ENCODE measurements at regions of chr9 and their contacts with region 1.

Region 1: GRCh38 chr9:33816327-33817252 is at the start of gene UBE2R2:
- DNase-seq: peak; percentile 97
- H3K4me3 Mint-ChIP-seq: peak within 1 kb of the TSS; percentile 94
- H3K27ac Mint-ChIP-seq: peak within 1 kb of the TSS; percentile 95
- H3K4me1 Mint-ChIP-seq: peaks cover 48% of the 10 kb centered on the region
- H3K27me3 Mint-ChIP-seq: peaks cover 3% of the 10 kb centered on the region
- total RNA-seq, gene UBE2R2: 41.6 and 41.9 TPM in 2 replicates

Region 2: GRCh38 chr9:33750307-33750838 is 66.2 kb before region 1 on chr9:
- intact Hi-C with region 1: no loop called
- DNase-seq: no peak
- H3K4me3 Mint-ChIP-seq: no peak overlapping the region
- H3K27ac Mint-ChIP-seq: no peak overlapping the region
- H3K4me1 Mint-ChIP-seq: peaks cover 10% of the 10 kb centered on the region
- H3K27me3 Mint-ChIP-seq: peaks cover 77% of the 10 kb centered on the region

Region 3: GRCh38 chr9:33852216-33852826 is 35.7 kb after region 1 on chr9:
- intact Hi-C with region 1: loop called (anchors 1 kb)
- DNase-seq: peak; percentile 80
- H3K4me3 Mint-ChIP-seq: no peak overlapping the region
- H3K27ac Mint-ChIP-seq: no peak overlapping the region
- H3K4me1 Mint-ChIP-seq: peaks cover 17% of the 10 kb centered on the region
- H3K27me3 Mint-ChIP-seq: no peaks in the 10 kb centered on the region

Region 4: GRCh38 chr9:33867747-33868439 is 51.3 kb after region 1 on chr9:
- intact Hi-C with region 1: no loop called
- DNase-seq: no peak
- H3K4me3 Mint-ChIP-seq: no peak overlapping the region
- H3K27ac Mint-ChIP-seq: no peak overlapping the region
- H3K4me1 Mint-ChIP-seq: peaks cover 6% of the 10 kb centered on the region
- H3K27me3 Mint-ChIP-seq: no peaks in the 10 kb centered on the region

Region 5: DNA sequence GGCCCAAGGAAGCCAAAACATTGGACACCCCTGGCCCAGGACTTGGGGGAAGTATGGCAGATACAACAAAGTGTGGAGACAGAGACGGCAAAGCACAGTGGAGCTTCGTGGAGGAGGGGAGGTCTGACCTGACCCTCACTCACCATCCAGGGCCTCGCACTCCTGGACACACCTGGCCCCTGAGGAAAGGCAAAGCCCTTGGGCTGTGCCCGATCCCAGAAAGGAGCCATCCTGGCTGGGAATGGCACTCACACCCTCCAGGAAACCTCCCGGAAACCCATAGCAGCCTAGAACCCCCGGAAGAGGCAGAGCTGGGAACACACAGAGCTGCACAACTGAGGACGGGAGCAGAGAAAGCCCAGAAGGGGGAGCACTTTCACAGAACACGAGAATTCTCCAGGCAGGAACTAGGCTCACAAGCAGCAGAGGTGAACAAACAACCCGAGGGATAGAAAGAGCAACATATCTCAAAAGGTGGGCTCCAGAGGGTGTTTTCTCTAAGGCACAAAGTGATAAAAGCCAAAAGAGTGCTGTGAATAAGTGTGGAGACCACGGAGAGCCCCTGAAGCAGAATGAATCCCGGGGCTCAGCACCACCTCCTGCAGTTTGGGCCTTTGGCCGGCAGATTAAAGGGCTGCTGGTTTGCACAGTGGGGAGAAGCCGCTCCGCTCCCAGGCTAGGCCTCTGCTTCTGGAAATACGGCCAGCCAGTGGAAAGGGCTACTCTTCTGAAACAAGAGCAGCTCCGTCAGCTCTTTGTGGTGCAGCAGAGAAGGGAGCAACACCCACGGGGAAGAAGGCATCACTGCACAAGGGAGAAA is 108.6 kb after region 1 on chr9:
- intact Hi-C with region 1: loop called (anchors 10 kb)
- DNase-seq: peak; percentile 76
- H3K4me3 Mint-ChIP-seq: no peak overlapping the region
- H3K27ac Mint-ChIP-seq: peak overlapping the region; percentile 35
- H3K4me1 Mint-ChIP-seq: no peaks in the 10 kb centered on the region
- H3K27me3 Mint-ChIP-seq: no peaks in the 10 kb centered on the region

Region 6: DNA sequence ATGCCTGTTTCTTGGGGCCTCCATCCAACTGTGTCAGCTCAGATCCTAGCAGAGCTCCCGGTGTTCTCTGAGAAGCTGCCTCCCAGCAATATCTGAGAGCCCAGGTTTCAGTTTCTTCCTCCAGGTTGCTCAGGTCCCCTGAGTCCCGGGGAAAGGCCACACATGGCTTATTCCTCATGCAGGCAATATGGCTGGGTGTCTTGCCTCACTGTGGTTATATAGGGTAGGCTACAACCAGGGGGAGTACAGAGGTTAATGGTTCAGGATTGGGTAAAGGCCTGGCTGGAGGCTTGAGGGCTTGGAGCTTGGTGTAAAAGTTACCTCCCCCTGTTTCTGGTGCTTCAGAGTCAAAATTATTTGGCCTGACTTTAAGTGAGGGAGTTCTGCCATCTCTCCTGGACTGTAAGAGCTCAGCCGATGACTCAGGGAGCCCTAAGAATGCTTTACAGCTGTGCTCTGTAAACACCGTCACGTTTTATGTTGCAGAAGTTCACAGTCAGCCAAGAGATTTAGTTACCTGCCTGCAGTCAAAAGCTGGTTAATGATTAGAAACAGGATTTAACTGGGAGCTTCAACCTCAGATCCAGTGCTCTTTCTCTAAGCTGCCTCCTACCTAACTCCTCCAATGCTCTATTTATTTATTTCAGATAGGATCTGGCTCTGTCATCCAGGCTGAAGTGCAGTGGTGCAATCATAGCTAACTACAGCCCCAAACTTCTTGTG is 256.4 kb after region 1 on chr9:
- intact Hi-C with region 1: loop called (anchors 1 kb)
- DNase-seq: no peak
- H3K4me3 Mint-ChIP-seq: no peak overlapping the region
- H3K27ac Mint-ChIP-seq: no peak overlapping the region
- H3K4me1 Mint-ChIP-seq: no peaks in the 10 kb centered on the region
- H3K27me3 Mint-ChIP-seq: peaks cover 1% of the 10 kb centered on the region

Region 7: DNA sequence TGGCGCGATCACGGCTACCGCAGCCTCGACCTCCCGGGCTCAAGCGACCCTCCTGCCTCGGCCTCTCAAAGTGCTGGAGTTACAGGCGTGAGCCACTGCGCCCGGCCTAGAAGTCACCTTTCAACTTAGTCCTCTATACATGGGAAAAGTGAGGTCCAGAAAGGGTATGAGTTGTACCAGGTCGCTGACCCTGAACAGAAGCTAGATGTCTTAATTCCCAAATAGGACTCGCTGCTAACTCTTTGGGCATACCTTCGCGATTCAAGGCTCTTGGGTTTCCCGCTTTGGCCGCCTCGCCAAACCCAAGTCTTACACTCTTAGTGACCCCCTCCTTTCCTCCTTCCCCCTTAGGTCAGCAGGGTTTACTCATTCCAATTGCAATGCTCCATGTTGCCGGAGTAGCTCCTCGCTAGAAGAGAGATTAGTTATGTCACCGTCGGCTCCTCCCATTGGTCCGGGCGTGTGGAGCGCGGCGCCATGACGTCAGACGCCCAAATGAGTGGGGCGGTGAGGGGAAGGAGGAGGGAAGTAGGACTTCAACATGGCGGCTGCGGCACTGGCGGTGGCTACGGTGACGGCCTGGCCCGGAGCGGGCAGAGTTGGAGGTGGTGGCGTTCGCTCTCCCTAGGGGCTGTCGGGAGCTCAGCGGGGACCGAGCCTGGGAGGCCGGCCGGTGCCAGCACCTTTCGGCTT is 362.1 kb after region 1 on chr9 and contains the start of gene UBAP1:
- intact Hi-C with region 1: loop called (anchors 5 kb)
- DNase-seq: peak; percentile 99
- H3K4me3 Mint-ChIP-seq: peak within 1 kb of the TSS; percentile 92
- H3K27ac Mint-ChIP-seq: peak within 1 kb of the TSS; percentile 96
- H3K4me1 Mint-ChIP-seq: peaks cover 17% of the 10 kb centered on the region
- H3K27me3 Mint-ChIP-seq: no peaks in the 10 kb centered on the region
- total RNA-seq, gene UBAP1: 30.9 and 32.5 TPM in 2 replicates

Region 8: GRCh38 chr9:34376596-34377403 is 560.2 kb after region 1 on chr9 and contains the start of gene MYORG:
- intact Hi-C with region 1: loop called (anchors 2 kb)
- DNase-seq: peak; percentile 99
- H3K4me3 Mint-ChIP-seq: peak within 1 kb of the TSS; percentile 89
- H3K27ac Mint-ChIP-seq: peak within 1 kb of the TSS; percentile 78
- H3K4me1 Mint-ChIP-seq: peaks cover 41% of the 10 kb centered on the region
- H3K27me3 Mint-ChIP-seq: peaks cover 4% of the 10 kb centered on the region
- total RNA-seq, gene MYORG: 1.4 TPM in 2 replicates